Activated T-helper 2 cell treated with anti-CD3 and anti-CD28 coated beads, Interferon-gamma antibody, Interleukin-2, Interleukin-4, amounts not matched to agents 10 μg/mL and 5 μg/mL and 100 μg/mL, durations not matched to agents 14 hours and 24 hours and 36 hours (primary cell): ENCODE measurements at regions of chr1 and their contacts with region 1.

Region 1: DNA sequence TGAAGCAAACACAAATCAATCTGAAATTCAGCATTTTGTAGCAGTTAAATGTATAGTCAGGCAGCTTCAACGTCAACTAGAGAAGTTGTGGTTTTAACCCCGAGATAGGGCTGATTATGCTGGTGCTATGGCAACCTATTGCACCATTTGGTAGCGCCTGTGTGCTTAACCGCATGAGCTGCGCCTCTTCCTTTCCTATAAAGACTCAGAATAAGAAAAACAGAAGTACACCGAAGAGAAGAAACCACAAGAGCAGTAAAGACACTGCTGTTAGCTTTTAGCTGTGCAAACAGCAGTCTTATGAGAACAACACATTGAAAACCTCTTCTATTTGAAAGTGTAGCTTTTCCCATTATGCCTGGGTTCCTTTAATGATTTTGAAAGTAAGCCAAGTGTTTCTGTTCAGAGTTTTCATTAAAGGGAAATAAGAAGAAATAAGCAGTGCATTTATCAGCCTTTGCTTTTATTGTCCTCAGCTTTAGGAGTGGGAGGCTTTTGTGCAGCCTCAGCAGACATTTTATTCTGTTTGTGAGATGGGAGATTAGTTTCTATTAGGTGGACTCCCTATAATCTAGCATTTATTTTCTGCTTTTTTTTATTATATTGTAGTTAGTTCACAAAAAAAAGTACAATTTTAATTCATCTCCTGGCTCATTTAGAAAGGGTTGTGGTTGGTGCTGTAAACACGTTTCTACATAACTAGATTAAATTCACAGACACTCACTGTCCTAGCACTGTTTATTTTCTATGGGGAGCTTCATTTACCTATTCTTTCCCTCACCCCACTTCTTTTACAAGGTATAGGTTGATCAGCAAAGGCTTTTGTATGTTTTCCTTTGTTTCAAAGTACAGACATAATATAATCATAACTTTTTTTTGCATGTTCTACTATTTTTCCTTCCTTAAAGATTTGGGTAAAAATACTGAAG is 43.3 kb downstream of the PTPRC start:
- DNase-seq: peak; percentile 84
- H3K4me3 Mint-ChIP-seq: peak overlapping the region; percentile 78
- H3K27ac Mint-ChIP-seq: peak overlapping the region; percentile 96
- H3K4me1 Mint-ChIP-seq: peaks cover 77% of the 10 kb centered on the region
- H3K27me3 Mint-ChIP-seq: no peaks in the 10 kb centered on the region

Region 2: GRCh38 chr1:197915862-197916499 is 766.1 kb before region 1 on chr1:
- intact Hi-C with region 1: loop called (anchors 10 kb)
- DNase-seq: no peak
- H3K4me3 Mint-ChIP-seq: peak overlapping the region; percentile 79
- H3K27ac Mint-ChIP-seq: no peak overlapping the region
- H3K4me1 Mint-ChIP-seq: peaks cover 74% of the 10 kb centered on the region
- H3K27me3 Mint-ChIP-seq: peaks cover 98% of the 10 kb centered on the region

Region 3: DNA sequence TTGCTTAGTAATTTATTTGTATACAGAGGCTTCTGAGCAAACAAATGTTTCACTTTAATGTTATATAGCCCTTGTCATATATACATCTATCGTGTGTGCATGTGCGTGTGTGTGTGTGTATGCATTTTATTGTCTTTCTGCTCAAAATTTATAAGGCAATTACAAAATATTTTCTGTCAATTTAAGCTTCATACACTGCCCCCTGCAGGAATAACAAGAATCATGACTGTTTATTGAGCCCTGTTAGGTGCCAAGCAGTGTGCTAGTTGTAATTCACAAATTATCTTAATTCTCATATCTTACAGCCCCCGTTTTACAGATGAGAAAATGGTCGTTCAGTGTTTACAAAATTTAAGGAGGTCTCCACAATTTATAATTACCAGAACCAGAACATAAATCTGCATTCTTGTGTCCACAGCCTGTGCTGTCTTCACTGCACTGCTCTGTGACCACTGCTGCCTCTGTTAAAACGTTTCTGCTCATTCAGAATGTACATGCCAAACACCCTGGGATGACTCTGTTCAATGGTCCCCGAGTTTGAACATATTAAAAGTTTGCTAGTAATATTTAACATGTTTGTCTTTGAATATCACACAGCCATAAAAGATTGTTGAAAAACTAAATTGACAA is 323.0 kb before region 1 on chr1:
- intact Hi-C with region 1: loop called (anchors 10 kb)
- DNase-seq: no peak
- H3K4me3 Mint-ChIP-seq: no peak overlapping the region
- H3K27ac Mint-ChIP-seq: no peak overlapping the region
- H3K4me1 Mint-ChIP-seq: peaks cover 10% of the 10 kb centered on the region
- H3K27me3 Mint-ChIP-seq: peaks cover 11% of the 10 kb centered on the region

Region 4: DNA sequence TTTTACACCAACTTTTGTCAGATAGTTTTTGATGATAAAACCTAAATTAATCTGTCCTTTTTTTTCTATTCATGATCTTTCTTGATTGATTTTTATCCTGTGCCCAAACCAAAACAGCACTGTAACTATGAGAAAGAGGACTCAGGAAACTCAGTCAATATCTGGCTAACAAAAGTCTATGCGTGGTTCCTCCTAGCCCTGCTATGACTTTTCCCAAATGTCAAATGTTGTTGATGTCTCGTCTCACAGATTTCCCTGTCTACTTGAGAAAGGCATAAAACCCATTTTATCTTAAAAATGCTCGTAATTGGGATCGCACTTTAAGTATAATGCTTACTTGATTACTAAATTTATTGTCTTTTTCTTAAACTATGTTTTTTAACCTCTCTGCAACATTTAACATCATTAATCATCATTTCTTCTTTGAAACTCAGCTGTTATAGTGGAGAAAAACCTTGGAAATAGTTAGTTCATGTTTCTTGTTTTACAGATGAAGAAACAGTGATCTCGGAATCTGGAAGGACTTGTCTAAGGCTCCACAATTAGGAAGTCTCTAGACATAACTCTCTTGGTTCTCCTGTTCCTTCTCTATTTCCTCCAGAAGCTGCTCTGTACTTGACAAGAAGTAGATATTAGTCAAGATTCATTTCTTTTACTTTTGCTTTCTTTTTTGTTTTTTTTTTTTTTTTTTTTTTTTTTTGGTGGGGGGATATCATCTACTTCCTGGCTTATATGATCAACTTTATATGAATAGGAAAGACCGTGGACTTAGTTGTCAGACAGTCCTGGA is 69.4 kb before region 1 on chr1:
- intact Hi-C with region 1: loop called (anchors 2 kb)
- DNase-seq: no peak
- H3K4me3 Mint-ChIP-seq: peak overlapping the region; percentile 75
- H3K27ac Mint-ChIP-seq: peak overlapping the region; percentile 86
- H3K4me1 Mint-ChIP-seq: peaks cover 59% of the 10 kb centered on the region
- H3K27me3 Mint-ChIP-seq: no peaks in the 10 kb centered on the region

Region 5: DNA sequence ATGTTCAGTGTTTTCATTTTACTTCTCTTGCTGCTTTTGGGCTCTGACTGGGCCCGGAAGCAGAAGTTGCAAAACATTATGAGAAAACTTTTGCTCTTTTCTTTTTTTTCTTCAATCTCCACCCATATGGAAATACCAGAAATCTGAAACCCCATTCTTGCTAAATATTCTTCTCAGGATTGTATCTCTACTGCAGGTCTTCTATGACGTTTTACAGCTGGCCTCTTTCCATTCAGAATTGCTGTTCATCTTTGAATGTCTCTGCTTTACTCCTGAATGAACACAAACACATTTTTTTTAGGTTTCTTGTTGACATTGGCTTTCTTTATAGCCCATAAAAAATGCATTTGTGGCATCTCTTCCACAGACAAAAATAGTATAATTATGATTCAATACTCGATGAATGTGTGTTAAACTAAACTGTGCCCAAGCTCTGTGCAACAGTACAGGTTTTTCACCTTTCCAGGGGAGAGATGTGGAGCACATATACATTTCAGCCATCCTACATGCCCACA is 24.5 kb before region 1 on chr1:
- intact Hi-C with region 1: loop called (anchors 1 kb)
- DNase-seq: no peak
- H3K4me3 Mint-ChIP-seq: peak overlapping the region; percentile 78
- H3K27ac Mint-ChIP-seq: peak overlapping the region; percentile 95
- H3K4me1 Mint-ChIP-seq: peaks cover 55% of the 10 kb centered on the region
- H3K27me3 Mint-ChIP-seq: no peaks in the 10 kb centered on the region

Region 6: GRCh38 chr1:198929961-198930599 is 248.0 kb after region 1 on chr1:
- intact Hi-C with region 1: loop called (anchors 5 kb)
- DNase-seq: no peak
- H3K4me3 Mint-ChIP-seq: peak overlapping the region; percentile 82
- H3K27ac Mint-ChIP-seq: peak overlapping the region; percentile 86
- H3K4me1 Mint-ChIP-seq: peaks cover 48% of the 10 kb centered on the region
- H3K27me3 Mint-ChIP-seq: no peaks in the 10 kb centered on the region